Ovary (tissue), 10 donors: ENCODE measurements at regions of chrX and their contacts with region 1.

Region 1: DNA sequence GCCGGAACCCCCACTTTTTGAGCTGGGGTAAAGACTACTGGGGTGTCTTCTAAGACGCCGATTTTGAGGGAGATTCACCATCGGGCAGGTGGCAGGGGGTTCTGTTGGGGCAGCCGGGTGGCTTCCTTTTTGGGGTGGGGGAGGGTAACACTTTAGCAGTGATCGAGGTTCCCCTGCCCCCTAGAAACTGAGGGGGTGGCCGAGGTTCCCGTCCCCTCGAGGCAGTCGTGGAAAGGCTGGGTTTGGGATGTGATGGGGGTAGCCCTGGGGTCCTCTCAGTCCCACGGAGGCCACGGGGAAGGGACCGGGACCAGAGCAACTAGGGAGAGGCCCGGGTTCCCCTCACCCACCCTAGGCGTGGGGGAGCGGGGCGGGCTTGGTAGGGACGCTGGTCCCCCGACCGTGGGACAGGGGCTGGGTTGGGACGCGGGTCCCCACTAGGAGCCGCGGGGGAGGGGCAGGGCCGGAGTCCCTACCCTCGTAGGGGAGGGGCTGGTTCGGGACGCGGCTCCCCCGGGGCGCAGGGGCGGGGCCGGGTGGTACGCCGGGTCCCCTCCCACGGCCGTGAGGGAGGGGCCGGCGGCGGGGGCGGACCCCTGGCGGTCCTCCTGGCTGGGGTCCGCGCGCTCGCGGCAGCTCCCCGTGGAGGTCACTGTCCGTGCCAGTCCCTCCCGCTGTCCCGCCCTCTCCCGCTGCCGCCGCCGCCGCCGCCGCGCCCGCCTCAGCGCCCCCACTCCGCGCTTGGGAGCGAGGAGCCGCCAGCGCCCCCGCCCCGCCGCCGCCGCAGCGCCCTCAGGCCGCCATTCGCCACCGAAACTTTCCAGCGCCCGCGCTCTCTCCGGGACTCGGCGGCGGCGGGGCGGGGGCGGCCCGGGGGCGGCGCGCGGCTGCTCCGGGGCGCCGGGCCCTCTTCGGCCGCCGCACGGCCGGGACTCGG is at the start of gene TBL1X:
- DNase-seq: peak; percentile 68 to 78 (median 72)
- H3K4me3 ChIP-seq: peak within 1 kb of the TSS; percentile 64
- H3K27ac ChIP-seq: peak within 1 kb of the TSS; percentile 80 to 88
- H3K4me1 ChIP-seq: peaks cover 4% of the 10 kb centered on the region
- H3K27me3 ChIP-seq: no peaks in the 10 kb centered on the region
- CTCF ChIP-seq: no peak
- EP300 ChIP-seq: no peak
- POLR2A ChIP-seq: no peak
- total RNA-seq, gene TBL1X: 15.1 to 46.5 (median 32.0) TPM

Region 2: GRCh38 chrX:9341291-9342201 is 123.2 kb before region 1 on chrX:
- intact Hi-C with region 1: loop called in 3 of 4 experiments (anchors 2 to 5 kb)
- DNase-seq: peak; percentile 59 to 75 (median 71)
- H3K4me3 ChIP-seq: peak overlapping the region; percentile 3
- H3K27ac ChIP-seq: peak overlapping the region in 1 of 2 donors; percentile 64
- H3K4me1 ChIP-seq: no peaks in the 10 kb centered on the region
- H3K27me3 ChIP-seq: no peaks in the 10 kb centered on the region
- CTCF ChIP-seq: no peak
- EP300 ChIP-seq: no peak
- POLR2A ChIP-seq: no peak

Region 3: GRCh38 chrX:10146346-10146745 is 681.6 kb after region 1 on chrX:
- intact Hi-C with region 1: no loop called
- DNase-seq: no peak
- H3K4me3 ChIP-seq: no peak overlapping the region
- H3K27ac ChIP-seq: no peak overlapping the region
- H3K4me1 ChIP-seq: no peaks in the 10 kb centered on the region
- H3K27me3 ChIP-seq: no peaks in the 10 kb centered on the region
- CTCF ChIP-seq: no peak
- EP300 ChIP-seq: no peak
- POLR2A ChIP-seq: no peak